ENCODE measurements at regions of chr12 and their contacts with region 1.

Region 1: GRCh38 chr12:69359531-69360347 is at the start of gene YEATS4:
- DNase-seq: peak; percentile 87 to 94 (median 94)
- H3K4me3 ChIP-seq: peak within 1 kb of the TSS; percentile 80 to 95 (median 93)
- H3K27ac ChIP-seq: peak within 1 kb of the TSS; percentile 86 to 93
- H3K4me1 ChIP-seq: peaks cover 1 to 15% (median 8%) of the 10 kb centered on the region in 4 experiments
- H3K27me3 ChIP-seq: no peaks in the 10 kb centered on the region

Region 2: DNA sequence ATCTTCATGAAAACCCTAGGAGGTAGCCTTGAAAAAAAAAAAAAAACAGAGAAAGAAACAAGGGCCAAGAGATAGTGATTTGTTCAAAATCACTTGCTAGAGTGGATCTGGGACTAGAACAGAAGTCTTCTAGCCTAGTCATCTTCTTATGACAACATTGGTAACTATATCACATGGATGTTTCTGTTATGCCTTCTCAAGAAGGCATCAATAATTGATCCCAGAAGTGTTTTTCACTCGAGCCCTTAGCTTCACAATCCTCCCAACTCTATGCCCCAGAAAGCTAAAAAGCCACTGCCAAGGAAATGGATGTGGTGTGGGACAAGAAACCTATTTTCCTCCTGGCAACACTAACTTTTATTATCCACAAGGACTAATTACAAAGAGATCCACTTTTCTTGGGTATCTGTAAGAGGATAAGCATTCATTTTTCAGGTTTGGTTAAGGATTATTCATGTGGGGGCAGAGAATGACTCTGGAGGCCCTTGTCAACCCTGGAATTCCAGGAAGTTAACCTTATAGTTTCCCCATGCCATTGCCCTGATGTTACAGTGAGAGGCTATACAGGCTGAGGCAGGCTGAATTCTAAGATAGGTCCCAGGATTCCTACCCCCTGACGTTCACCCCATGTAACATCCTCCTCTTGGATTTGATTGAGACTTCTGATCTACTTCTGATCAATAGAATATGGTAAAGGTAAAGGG is 359.0 kb before region 1 on chr12:
- CTCF ChIA-PET with region 1: no interaction called
- POLR2A ChIA-PET with region 1: no interaction called
- DNase-seq: no peak
- H3K4me3 ChIP-seq: no peak overlapping the region
- H3K27ac ChIP-seq: no peak overlapping the region
- H3K4me1 ChIP-seq: peaks cover 0 to 2% (median 0%) of the 10 kb centered on the region in 4 experiments
- H3K27me3 ChIP-seq: no peaks in the 10 kb centered on the region

Region 3: DNA sequence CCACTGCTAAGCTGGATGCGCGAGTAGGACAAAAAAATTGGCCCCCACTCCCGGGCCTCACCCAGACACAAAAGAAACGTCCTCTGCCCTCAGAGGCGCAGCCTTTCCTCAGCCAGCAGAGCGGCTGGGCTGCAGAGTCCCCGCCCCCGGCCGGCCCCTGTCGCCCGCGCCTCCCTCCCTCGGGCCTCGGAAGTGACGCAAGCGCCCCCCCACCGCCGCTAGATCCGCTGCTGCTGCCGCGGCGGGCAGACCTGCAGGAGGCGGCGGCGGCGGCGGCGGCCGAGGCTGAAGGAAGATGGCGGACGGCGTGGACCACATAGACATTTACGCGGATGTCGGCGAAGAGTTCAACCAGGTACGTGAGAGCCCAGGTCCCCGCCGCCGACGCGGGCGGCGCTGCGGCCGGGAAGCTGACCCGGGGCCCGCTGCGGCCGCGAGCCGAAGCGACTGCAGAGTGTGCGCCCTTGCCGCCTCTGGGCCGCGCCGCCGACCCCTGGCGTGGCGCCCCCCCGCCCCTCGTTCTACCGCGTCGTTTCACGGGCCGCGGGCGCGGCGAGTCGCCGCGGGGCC is 120.3 kb before region 1 on chr12 and contains the start of gene CPSF6:
- CTCF ChIA-PET with region 1: no interaction called
- POLR2A ChIA-PET with region 1: no interaction called
- DNase-seq: peak; percentile 93 to 98 (median 97)
- H3K4me3 ChIP-seq: peak within 1 kb of the TSS; percentile 61 to 98 (median 89)
- H3K27ac ChIP-seq: peak within 1 kb of the TSS; percentile 79 to 95
- H3K4me1 ChIP-seq: peaks cover 13 to 41% (median 30%) of the 10 kb centered on the region in 4 experiments
- H3K27me3 ChIP-seq: no peaks in the 10 kb centered on the region

Region 4: GRCh38 chr12:69290545-69291277 is 69.0 kb before region 1 on chr12:
- CTCF ChIA-PET with region 1: interaction called, 14 read pairs
- POLR2A ChIA-PET with region 1: no interaction called
- DNase-seq: peak; percentile 89 to 94 (median 92)
- H3K4me3 ChIP-seq: no peak overlapping the region
- H3K27ac ChIP-seq: no peak overlapping the region
- H3K4me1 ChIP-seq: no peaks in the 10 kb centered on the region
- H3K27me3 ChIP-seq: peaks cover 2 to 18% (median 5%) of the 10 kb centered on the region in 5 experiments

Region 5: DNA sequence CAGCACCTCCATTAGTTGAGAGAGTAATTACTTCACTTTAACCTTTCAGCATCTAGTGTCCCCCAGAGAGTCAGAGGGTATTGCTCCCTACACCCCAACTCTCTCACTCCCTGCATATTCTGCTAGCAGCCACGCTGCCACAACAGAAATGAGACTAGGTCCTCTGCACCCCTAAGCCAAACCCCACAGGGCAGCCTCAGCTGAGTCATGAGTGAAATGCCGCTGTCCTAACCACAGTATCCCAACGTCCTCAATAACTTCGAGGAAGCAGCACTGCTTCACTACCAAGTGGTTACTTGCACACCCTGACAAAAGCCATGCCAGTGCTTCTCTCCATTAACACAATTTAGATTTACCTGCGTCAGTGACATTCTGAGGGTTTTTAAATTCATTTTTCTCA is 18.4 kb before region 1 on chr12:
- CTCF ChIA-PET with region 1: interaction called, 15 read pairs
- POLR2A ChIA-PET with region 1: no interaction called
- DNase-seq: peak in 2 of 3 donors; percentile 53 to 79
- H3K4me3 ChIP-seq: no peak overlapping the region
- H3K27ac ChIP-seq: no peak overlapping the region
- H3K4me1 ChIP-seq: peaks cover 3 to 27% (median 7%) of the 10 kb centered on the region in 4 experiments
- H3K27me3 ChIP-seq: no peaks in the 10 kb centered on the region

Region 6: DNA sequence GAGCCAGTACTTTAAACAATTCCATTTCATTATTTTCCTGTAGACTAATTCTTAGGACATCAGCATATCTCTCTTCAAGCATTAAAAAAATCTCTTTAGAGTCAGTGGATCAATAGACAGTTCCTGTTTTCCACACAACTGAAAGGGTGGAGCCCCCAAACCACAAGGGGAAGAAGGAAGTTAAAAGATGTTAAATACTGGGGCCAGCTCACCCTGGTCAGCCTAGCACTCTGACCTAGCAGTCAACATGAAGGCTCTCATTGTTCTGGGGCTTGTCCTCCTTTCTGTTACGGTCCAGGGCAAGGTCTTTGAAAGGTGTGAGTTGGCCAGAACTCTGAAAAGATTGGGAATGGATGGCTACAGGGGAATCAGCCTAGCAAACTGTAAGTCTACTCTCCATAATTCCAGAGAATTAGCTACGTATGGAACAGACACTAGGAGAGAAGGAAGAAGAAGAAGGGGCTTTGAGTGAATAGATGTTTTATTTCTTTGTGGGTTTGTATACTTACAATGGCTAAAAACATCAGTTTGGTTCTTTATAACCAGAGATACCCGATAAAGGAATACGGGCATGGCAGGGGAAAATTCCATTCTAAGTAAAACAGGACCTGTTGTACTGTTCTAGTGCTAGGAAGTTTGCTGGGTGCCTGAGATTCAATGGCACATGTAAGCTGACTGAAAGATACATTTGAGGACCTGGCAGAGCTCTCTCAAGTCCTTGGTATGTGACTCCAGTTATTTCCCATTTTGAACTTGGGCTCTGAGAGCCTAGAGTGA is 11.4 kb before region 1 on chr12 and contains the start of gene LYZ:
- CTCF ChIA-PET with region 1: interaction called, 19 read pairs
- POLR2A ChIA-PET with region 1: no interaction called
- DNase-seq: peak in 2 of 3 donors; percentile 56 to 66
- H3K4me3 ChIP-seq: peak within 1 kb of the TSS in 6 of 7 experiments; percentile 3 to 69 (median 54)
- H3K27ac ChIP-seq: peak within 1 kb of the TSS in 1 of 2 experiments; percentile 27
- H3K4me1 ChIP-seq: peaks cover 2 to 18% (median 9%) of the 10 kb centered on the region in 4 experiments
- H3K27me3 ChIP-seq: no peaks in the 10 kb centered on the region

Measured in common myeloid progenitor, CD34-positive (primary cell).